Activated T-helper 2 cell treated with anti-CD3 and anti-CD28 coated beads, Interferon-gamma antibody, Interleukin-2, Interleukin-4, amounts not matched to agents 10 μg/mL and 5 μg/mL and 100 μg/mL, durations not matched to agents 14 hours and 24 hours and 36 hours (primary cell): ENCODE measurements at regions of chr7 and their contacts with region 1.

Region 1: DNA sequence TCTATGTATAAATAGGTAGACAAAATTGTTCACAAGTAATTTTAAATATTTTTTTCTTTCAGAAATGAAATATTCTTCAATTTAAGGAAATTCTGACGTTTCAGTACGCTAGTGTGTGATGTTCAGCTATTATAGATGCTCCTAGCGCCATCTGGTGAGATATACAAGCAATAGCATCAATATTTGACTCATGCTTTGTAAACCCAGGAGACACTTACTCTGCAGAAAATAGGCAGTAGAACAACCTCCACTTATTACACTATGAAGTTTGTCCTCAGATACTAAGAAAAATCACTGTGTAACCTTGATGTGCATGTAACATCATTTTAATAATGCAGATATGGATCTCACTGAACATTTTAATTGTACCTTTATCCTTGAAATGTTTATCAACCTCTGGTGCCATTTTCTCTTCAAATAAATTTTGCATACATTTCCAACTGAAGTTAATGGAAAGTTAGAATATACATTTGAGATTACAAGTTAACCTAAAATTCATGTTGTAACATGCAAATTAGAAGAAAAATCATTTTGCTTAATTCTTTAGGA is 151.5 kb upstream of the FAM3C start:
- DNase-seq: no peak
- H3K4me3 Mint-ChIP-seq: no peak overlapping the region
- H3K27ac Mint-ChIP-seq: no peak overlapping the region
- H3K4me1 Mint-ChIP-seq: peaks cover 38% of the 10 kb centered on the region
- H3K27me3 Mint-ChIP-seq: peaks cover 4% of the 10 kb centered on the region

Region 2: GRCh38 chr7:121138262-121138933 is 409.2 kb before region 1 on chr7:
- intact Hi-C with region 1: loop called (anchors 5 kb)
- DNase-seq: no peak
- H3K4me3 Mint-ChIP-seq: no peak overlapping the region
- H3K27ac Mint-ChIP-seq: no peak overlapping the region
- H3K4me1 Mint-ChIP-seq: peaks cover 21% of the 10 kb centered on the region
- H3K27me3 Mint-ChIP-seq: peaks cover 5% of the 10 kb centered on the region

Region 3: DNA sequence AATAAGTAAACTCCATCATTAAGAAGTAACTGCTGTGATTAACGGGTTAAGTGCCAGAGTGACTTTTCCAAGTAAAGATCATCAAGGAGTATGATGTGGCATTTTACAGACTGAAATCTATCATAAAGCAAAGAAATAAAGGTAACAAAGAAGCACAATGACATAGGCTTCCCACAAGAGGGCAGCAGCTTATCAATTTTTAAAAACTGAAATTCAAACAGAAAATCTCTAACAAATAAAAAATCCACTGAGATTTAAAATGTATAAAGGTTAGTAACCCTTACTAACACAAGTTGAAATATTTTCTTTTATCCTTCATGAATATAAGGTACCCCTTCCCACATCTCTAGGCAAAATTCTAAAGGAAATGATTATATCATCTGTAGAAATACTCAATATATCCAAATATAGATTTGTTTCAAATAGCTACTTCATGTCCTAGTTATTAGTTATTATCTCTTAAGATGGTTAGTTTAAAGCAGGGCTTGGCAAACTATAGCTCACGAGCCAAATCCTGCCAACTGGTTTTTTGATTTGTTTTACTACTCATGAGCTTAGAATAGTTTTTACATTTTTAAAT is 180.7 kb before region 1 on chr7:
- intact Hi-C with region 1: loop called (anchors 1 kb)
- DNase-seq: no peak
- H3K4me3 Mint-ChIP-seq: no peak overlapping the region
- H3K27ac Mint-ChIP-seq: no peak overlapping the region
- H3K4me1 Mint-ChIP-seq: peaks cover 36% of the 10 kb centered on the region
- H3K27me3 Mint-ChIP-seq: no peaks in the 10 kb centered on the region

Region 4: DNA sequence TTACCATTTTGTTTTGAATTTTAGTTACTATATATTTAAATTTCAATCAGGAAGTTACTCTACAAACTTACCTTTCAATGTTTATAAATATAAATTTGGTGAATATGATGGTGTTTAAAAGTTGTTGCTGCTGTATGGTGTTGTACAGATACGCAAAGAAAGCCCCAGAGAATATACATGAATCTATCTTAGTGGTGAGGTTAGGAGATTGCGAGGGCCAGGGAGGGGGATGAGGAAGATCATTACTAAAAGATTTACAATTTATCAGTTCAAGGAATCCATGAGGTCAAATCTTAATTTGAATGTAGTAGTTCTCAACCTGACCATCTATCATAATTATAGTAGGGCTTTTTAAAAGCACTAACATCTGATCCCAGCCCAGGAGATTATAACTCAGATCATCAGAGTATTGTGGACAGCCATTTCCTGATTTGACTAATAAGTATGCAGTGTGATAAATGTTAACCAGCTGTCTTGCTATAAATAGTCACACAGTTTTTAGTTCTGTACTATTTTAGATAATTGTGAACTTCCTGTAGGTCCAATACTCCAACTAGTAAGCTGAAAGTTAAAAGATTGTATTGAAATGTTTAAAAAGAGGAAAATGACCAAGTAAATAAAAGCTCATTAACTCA is 175.1 kb before region 1 on chr7:
- intact Hi-C with region 1: loop called (anchors 1 kb)
- DNase-seq: no peak
- H3K4me3 Mint-ChIP-seq: peak overlapping the region; percentile 18
- H3K27ac Mint-ChIP-seq: peak overlapping the region; percentile 50
- H3K4me1 Mint-ChIP-seq: peaks cover 57% of the 10 kb centered on the region
- H3K27me3 Mint-ChIP-seq: no peaks in the 10 kb centered on the region

Region 5: GRCh38 chr7:121437456-121438127 is 110.0 kb before region 1 on chr7:
- intact Hi-C with region 1: loop called (anchors 1 kb)
- DNase-seq: no peak
- H3K4me3 Mint-ChIP-seq: peak overlapping the region; percentile 55
- H3K27ac Mint-ChIP-seq: peak overlapping the region; percentile 86
- H3K4me1 Mint-ChIP-seq: peaks cover 23% of the 10 kb centered on the region
- H3K27me3 Mint-ChIP-seq: no peaks in the 10 kb centered on the region

Region 6: GRCh38 chr7:121500360-121501058 is 47.1 kb before region 1 on chr7:
- intact Hi-C with region 1: loop called (anchors 1 kb)
- DNase-seq: no peak
- H3K4me3 Mint-ChIP-seq: no peak overlapping the region
- H3K27ac Mint-ChIP-seq: peak overlapping the region; percentile 86
- H3K4me1 Mint-ChIP-seq: peaks cover 25% of the 10 kb centered on the region
- H3K27me3 Mint-ChIP-seq: no peaks in the 10 kb centered on the region

Region 7: DNA sequence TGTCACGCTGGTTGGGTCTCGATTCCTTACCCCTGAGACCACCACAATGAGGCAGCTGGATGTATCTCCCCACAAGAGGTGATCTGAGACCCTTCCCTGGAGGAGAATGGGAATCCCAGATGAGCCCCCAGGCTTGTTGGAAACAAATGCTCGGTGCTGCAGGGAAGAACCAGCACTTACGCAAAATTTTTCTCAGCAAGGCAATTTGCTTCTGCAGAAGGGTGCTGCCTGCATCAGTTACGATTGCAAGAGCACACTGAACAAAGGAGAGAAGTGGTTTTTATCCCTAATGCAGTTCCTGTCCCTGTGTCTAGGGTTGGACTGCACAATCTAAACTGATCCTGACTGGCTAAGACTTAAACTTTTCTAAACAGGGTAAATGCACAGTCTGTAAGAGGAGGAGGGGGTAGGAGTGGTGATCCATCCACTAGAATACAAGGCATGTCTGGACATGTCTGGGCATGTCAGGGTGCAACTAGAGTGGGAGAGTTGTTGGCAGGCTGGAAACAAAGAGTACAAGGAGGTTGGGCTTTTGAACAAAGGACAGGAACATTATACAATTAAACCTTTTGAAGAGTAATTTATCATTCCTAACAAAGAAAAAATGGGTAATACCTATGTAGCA is 36.6 kb before region 1 on chr7:
- intact Hi-C with region 1: no loop called
- DNase-seq: no peak
- H3K4me3 Mint-ChIP-seq: no peak overlapping the region
- H3K27ac Mint-ChIP-seq: no peak overlapping the region
- H3K4me1 Mint-ChIP-seq: no peaks in the 10 kb centered on the region
- H3K27me3 Mint-ChIP-seq: no peaks in the 10 kb centered on the region